Activated CD4-positive, alpha-beta T cell treated with anti-CD3 and anti-CD28 coated beads for 36 hours (primary cell): ENCODE measurements at regions of chr6 and their contacts with region 1.

Region 1: DNA sequence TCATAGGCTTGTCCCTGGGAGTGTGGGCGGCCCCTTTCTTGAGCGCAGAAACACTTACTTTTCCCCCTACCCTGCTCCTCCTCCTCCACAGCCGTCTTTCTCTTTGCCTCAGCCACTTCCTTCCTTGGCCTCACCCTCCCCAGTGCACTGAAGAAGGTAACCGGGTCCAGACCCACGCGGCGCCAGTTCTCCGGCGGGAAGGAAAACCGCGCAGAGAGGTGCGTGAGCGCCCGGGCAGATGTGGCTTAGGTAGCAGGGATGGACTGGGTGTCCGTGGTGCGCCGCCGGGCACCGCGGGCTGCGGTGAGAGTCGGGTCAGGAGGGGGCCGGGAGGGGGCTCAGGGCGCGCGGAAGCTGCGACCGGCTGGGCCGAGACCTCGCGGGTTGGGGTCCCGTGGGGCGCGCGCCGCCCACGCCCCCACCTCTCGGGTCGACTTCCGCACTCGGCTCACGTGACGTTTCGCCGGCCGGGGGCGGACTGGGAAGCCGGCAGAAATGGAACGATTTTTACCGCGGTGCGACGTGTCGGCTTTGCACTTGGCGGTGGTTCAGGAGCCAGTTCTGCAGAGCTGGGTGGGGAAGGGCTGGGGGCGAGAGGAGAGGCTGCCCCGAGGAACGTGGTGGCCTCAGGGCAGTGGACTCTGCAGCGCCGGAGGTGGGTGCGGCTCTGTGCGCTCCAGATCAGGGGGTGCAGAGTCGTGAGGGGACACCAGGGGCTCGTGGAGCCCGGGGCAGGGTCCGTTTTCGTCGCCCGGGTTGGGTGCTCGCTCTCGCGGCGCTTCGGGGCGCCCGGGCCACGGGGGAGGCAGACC is at the start of gene ABRACL:
- DNase-seq: peak; percentile 93
- ATAC-seq: peak; percentile 85
- H3K4me3 Mint-ChIP-seq: no peak within 1 kb of the TSS
- H3K27ac Mint-ChIP-seq: peak within 1 kb of the TSS; percentile 93
- H3K4me1 Mint-ChIP-seq: peaks cover 23% of the 10 kb centered on the region
- H3K27me3 Mint-ChIP-seq: no peaks in the 10 kb centered on the region
- total RNA-seq, gene ABRACL: 92.5 to 180 TPM

Region 2: DNA sequence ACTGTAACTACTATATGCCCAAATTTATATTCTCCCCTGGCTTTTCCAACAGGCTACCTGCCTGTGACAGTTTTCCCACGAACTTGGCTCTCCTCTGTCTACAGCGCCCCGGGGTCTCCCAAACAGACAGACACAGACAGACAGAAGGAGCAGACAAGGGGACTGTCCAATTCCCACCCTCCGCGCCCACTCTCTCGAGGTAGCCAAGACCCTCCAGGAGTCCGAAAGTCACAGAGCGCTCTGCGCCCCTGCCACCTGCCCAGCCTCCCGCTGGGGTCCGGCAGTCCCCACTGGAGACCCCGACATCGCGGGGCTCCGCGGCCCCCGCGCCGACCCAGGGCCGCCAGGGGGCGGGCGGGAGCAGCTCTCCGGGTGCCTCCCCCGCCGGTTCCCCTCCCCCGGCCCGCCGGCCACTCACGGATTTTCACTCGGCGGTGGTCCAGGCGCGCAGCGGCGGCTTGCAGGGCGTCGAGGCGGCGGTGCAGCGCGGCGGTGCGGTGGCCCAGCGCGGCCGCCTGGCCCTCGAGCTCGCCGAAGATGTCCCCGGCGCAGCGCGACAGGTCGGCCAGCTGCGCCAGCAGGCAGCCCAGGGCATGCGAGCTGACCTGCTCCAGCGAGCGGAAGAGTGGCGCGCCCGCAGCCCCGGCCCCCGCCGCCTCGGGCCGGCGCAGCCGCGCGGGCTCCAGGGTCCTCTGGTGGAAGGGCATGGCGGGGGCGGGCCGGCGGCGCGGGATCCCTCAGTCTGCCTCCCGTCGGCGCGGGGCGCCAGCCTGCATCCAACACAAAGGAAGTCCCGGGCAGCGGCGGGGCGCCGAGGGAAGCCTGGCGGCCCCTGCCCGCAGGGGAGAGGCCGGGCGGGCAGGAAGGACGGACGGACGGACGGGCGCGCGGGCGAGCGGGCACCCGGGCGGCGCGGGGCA is 336.5 kb before region 1 on chr6:
- CTCF ChIA-PET with region 1: no interaction called
- POLR2A ChIA-PET with region 1: no interaction called
- intact Hi-C with region 1: loop called in 1 of 2 experiments (anchors 5 kb)
- DNase-seq: peak; percentile 74
- ATAC-seq: peak; percentile 63
- H3K4me3 Mint-ChIP-seq: peak overlapping the region; percentile 68
- H3K27ac Mint-ChIP-seq: no peak overlapping the region
- H3K4me1 Mint-ChIP-seq: peaks cover 10% of the 10 kb centered on the region
- H3K27me3 Mint-ChIP-seq: peaks cover 29% of the 10 kb centered on the region

Region 3: DNA sequence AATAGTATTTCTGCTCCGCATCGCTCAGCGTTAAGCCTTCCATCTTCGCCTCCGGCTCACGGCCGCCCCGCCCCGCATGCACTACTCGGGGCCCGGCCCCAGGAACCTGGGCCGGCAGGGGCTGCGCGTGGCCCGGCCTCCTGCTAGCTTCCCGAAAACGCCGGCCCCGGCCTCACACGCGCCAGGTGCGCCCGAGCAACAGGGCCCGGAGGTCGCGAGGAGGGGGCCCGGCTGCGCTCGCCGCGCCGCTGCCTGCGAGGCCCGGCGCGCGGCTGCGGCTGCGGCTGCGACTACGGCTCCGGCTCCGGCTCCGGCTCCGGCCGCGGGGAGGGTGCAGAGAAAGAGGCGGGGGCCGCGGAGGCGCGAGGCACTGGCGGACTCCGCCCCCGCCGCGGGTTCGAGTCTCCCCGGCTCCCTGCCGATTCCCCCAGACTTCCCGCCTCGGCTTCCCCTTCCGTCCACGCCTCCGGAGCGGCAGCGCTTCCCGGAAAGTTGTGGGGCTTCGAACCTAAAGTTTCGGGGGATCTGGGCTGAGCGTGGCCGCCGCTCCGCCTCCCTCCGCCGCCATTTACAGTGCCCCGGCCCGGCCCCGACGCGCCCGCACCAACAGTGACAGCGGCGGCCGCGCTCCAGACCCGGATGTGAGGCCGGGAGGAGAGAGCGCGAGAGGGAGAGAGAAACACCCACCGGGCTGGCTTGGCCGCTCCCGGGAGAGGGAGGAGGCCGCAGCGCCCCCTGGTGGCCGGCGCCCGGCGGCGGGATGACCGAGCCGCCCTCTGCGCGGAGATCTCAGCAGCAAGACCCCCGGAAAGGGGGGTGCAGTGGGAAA is 41.0 kb before region 1 on chr6 and contains the start of gene REPS1:
- CTCF ChIA-PET with region 1: interaction called, 9 read pairs
- POLR2A ChIA-PET with region 1: interaction called, 3 read pairs
- intact Hi-C with region 1: loop called (anchors 1 kb)
- DNase-seq: peak; percentile 95
- ATAC-seq: peak; percentile 96
- H3K4me3 Mint-ChIP-seq: peak within 1 kb of the TSS; percentile 87
- H3K27ac Mint-ChIP-seq: peak within 1 kb of the TSS; percentile 91
- H3K4me1 Mint-ChIP-seq: peaks cover 6% of the 10 kb centered on the region
- H3K27me3 Mint-ChIP-seq: no peaks in the 10 kb centered on the region
- total RNA-seq, gene REPS1: 60.3 to 90.9 TPM

Region 4: DNA sequence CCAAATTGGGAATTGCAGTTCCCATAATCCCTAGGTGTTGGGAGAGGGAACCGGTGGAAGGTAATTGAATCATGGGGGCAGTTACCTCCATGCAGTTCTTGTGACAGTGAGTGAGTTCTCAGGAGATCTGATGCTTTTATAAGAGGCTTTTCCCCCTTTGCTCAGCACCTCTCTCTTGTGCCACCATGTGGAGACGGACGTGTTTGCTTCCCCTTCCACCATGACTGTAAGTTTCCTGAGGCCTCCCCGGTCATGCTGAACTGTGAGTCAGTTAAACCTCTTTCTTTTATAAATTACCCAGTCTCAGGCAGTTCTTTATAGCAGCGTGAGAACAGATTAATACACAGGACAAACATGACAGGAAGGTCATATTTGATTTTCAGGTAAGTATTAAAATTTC is 80.7 kb after region 1 on chr6:
- CTCF ChIA-PET with region 1: interaction called, 3 read pairs
- POLR2A ChIA-PET with region 1: no interaction called
- intact Hi-C with region 1: loop called (anchors 5 kb)
- DNase-seq: peak; percentile 74
- ATAC-seq: peak; percentile 62
- H3K4me3 Mint-ChIP-seq: no peak overlapping the region
- H3K27ac Mint-ChIP-seq: peak overlapping the region; percentile 11
- H3K4me1 Mint-ChIP-seq: peaks cover 48% of the 10 kb centered on the region
- H3K27me3 Mint-ChIP-seq: no peaks in the 10 kb centered on the region

Region 5: GRCh38 chr6:139173172-139173571 is 144.3 kb after region 1 on chr6:
- CTCF ChIA-PET with region 1: no interaction called
- POLR2A ChIA-PET with region 1: no interaction called
- intact Hi-C with region 1: loop called in 1 of 2 experiments (anchors 5 kb)
- DNase-seq: no peak
- ATAC-seq: peak; percentile 89
- H3K4me3 Mint-ChIP-seq: no peak overlapping the region
- H3K27ac Mint-ChIP-seq: peak overlapping the region; percentile 87
- H3K4me1 Mint-ChIP-seq: peaks cover 91% of the 10 kb centered on the region
- H3K27me3 Mint-ChIP-seq: no peaks in the 10 kb centered on the region

Region 6: DNA sequence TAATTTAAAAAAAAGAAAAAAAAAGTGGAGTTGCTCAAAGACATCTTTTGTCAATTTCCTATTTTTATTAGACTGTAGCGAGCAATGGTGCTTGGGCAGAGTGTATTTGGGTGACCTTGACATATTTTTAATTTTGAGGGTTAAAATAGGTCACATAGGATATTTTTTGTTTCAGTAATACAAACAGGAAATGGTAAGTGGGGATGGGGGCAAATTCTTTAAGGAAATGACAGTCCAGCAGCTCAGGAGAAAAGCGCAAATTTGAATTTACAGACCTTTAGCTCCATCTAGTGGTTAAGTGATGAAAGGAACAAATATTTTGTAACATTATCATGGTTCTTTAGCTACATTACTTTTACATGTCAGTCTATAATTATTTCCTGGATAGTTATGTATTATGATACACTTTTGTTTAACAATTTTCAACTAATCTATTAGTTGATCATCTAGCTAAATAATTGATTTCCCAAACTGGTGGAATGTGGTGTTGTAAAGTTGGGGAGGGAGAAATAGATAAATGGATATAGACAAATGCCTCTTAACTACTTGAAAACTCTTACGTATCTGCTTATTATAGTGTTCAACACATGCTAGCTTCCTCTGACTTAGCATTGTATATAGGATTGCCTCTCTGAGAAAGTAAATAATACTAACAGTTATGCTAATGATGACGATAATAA is 335.6 kb after region 1 on chr6:
- CTCF ChIA-PET with region 1: interaction called, 3 read pairs
- POLR2A ChIA-PET with region 1: no interaction called
- intact Hi-C with region 1: loop called in 1 of 2 experiments (anchors 2 kb)
- DNase-seq: no peak
- ATAC-seq: peak; percentile 57
- H3K4me3 Mint-ChIP-seq: no peak overlapping the region
- H3K27ac Mint-ChIP-seq: no peak overlapping the region
- H3K4me1 Mint-ChIP-seq: peaks cover 25% of the 10 kb centered on the region
- H3K27me3 Mint-ChIP-seq: no peaks in the 10 kb centered on the region